Thyroid gland (tissue), 4 donors: ENCODE measurements at regions of chr19 and their contacts with region 1.

Region 1: GRCh38 chr19:44356383-44357111 is at the start of gene ZNF112:
- DNase-seq: peak; percentile 91
- H3K4me3 ChIP-seq: peak within 1 kb of the TSS in 2 of 3 donors; percentile 41 to 87
- H3K27ac ChIP-seq: peak within 1 kb of the TSS in 2 of 3 donors; percentile 44 to 54
- H3K4me1 ChIP-seq: peaks cover 4 to 5% of the 10 kb centered on the region in 2 donors
- H3K27me3 ChIP-seq: no peaks in the 10 kb centered on the region
- CTCF ChIP-seq: no peak
- POLR2A ChIP-seq: peak in 1 of 2 donors; percentile 43
- total RNA-seq, gene ZNF112: 7.8 to 22.6 (median 11.2) TPM

Region 2: GRCh38 chr19:44304659-44305193 is 51.8 kb before region 1 on chr19 and contains the start of gene ZNF235:
- intact Hi-C with region 1: loop called (anchors 10 kb)
- DNase-seq: peak; percentile 88 to 89
- H3K4me3 ChIP-seq: peak within 1 kb of the TSS; percentile 38 to 66 (median 52)
- H3K27ac ChIP-seq: peak within 1 kb of the TSS in 1 of 3 donors; percentile 61
- H3K4me1 ChIP-seq: peaks cover 6% of the 10 kb centered on the region in 2 donors
- H3K27me3 ChIP-seq: no peaks in the 10 kb centered on the region
- CTCF ChIP-seq: no peak
- POLR2A ChIP-seq: peak in 1 of 2 donors; percentile 47
- total RNA-seq, gene ZNF235: 7.3 to 17.7 (median 12.8) TPM

Region 3: DNA sequence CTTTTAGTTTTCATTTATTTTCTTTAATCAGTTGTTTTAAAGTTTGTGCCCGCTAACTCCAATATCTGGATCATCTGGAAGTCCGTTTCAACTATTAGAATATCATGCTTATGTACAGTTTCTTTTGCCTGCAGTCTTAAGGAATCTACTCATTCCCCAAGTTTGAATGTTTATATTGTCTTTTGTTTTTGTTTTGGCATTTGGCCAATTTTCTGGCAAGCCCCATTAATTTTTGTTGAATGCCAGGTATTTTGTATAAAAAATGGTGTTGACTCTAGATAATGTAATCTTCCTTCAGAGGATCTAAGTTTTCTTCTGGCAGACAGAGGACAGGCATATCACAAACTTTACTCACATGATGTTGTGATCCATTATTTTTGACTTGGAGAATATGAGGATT is 40.7 kb before region 1 on chr19:
- intact Hi-C with region 1: no loop called
- DNase-seq: no peak
- H3K4me3 ChIP-seq: no peak overlapping the region
- H3K27ac ChIP-seq: no peak overlapping the region
- H3K4me1 ChIP-seq: no peaks in the 10 kb centered on the region
- H3K27me3 ChIP-seq: no peaks in the 10 kb centered on the region
- CTCF ChIP-seq: no peak
- POLR2A ChIP-seq: no peak